Calu3 (cell line): ENCODE measurements at regions of chr3 and their contacts with region 1.

Region 1: DNA sequence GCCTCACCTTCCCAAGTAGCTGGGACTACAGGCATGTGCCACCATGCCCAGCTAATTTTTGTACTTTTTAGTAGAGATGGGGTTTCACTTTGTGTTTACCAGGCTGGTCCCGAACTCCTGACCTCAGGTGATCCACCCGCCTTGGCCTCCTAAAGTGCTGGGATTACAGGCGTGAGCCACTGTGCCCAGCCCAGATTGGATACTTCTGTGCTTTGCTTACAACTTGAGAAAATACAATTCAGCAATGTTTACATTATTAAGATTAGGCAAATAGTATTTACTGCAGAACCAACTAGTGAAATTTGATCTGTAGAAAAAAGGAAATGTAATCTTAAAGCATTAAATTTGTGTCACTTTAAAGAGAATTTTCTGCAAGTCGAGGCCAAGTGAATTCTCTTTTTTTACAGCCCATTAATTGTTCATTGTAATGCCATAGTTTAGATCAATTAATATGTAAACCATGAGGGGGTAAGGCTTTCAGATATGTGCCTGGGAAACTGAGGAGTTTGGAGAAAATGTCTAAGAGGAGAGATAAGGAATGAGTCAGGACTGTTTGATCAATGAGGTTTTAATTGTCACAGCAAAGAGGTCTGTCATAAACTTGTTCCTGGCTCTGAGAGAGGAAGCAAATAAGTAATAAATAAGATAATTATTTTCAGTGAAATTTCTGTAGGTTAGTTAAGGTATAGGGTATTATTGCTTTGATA is 15.3 kb downstream of the PYDC2 start:
- DNase-seq: peak; percentile 50
- H3K4me3 Mint-ChIP-seq: peak overlapping the region; percentile 6
- H3K27ac Mint-ChIP-seq: peak overlapping the region; percentile 94
- H3K4me1 Mint-ChIP-seq: peaks cover 43% of the 10 kb centered on the region
- H3K27me3 Mint-ChIP-seq: no peaks in the 10 kb centered on the region
- CTCF ChIP-seq: no peak

Region 2: GRCh38 chr3:191430103-191430502 is 46.1 kb before region 1 on chr3:
- CTCF ChIA-PET with region 1: no interaction called
- intact Hi-C with region 1: loop called (anchors 2 kb)
- DNase-seq: no peak
- H3K4me3 Mint-ChIP-seq: peak overlapping the region; percentile 27
- H3K27ac Mint-ChIP-seq: peak overlapping the region; percentile 12
- H3K4me1 Mint-ChIP-seq: peaks cover 27% of the 10 kb centered on the region
- H3K27me3 Mint-ChIP-seq: no peaks in the 10 kb centered on the region
- CTCF ChIP-seq: no peak

Region 3: DNA sequence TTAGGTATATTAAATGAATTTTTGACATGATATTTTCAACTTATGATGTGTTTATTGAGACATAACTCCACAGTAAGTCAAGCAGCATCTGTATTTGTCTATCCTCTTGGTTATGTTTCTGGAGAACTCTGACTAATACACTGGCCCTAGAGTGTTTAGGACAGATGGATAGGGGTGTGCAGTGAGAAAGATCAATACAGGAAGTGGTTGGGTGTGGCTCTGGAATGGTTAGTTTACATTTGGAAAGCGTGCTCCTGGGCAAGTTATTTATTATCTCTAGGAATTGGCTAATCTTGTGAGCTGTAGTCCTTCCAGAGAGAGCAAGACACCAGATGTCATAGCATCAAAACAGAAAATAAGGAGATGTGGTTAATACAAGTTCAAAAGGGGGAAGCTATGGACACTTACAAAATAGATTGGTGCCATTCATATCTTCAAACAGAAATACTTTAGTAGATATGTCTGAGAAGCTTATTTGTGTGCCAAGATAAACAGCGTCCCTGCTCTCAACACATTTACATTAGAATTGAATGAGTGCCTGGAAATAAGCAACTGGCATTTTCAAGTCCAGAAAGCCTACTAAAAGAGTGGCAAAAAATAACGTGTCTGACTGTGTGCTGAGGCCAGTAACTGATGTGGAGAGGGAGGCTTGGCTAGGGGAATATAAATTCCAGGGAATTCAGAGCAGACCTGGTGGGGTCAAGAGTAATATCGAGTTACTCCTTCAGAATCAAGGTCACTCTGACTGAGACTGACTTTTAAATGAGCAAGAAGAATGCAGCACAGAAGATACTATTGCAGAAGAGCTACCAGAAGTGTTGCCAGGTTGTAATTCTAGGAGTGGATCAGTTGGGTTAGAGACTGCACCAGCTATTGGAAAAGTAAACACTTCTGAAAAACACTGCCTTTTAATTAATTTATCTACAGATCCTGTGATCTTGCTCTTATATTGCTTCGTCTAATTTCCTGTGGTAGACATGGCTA is 1731.4 kb after region 1 on chr3:
- CTCF ChIA-PET with region 1: no interaction called
- intact Hi-C with region 1: loop called (anchors 10 kb)
- DNase-seq: peak; percentile 72
- H3K4me3 Mint-ChIP-seq: peak overlapping the region; percentile 40
- H3K27ac Mint-ChIP-seq: peak overlapping the region; percentile 76
- H3K4me1 Mint-ChIP-seq: peaks cover 17% of the 10 kb centered on the region
- H3K27me3 Mint-ChIP-seq: no peaks in the 10 kb centered on the region
- CTCF ChIP-seq: no peak